ENCODE measurements at regions of chr17 and their contacts with region 1.

Region 1: GRCh38 chr17:48374650-48375230 is 55.3 kb downstream of the SKAP1 start:
- DNase-seq: no peak
- ATAC-seq: peak in 3 of 4 donors; percentile 60 to 67 (median 63)
- H3K4me3 ChIP-seq: no peak overlapping the region
- H3K27ac ChIP-seq: no peak overlapping the region
- H3K4me1 ChIP-seq: no peaks in the 10 kb centered on the region
- H3K27me3 ChIP-seq: peaks cover 4 to 14% (median 9%) of the 10 kb centered on the region in 3 donors
- CTCF ChIP-seq: peak; percentile 74

Region 2: DNA sequence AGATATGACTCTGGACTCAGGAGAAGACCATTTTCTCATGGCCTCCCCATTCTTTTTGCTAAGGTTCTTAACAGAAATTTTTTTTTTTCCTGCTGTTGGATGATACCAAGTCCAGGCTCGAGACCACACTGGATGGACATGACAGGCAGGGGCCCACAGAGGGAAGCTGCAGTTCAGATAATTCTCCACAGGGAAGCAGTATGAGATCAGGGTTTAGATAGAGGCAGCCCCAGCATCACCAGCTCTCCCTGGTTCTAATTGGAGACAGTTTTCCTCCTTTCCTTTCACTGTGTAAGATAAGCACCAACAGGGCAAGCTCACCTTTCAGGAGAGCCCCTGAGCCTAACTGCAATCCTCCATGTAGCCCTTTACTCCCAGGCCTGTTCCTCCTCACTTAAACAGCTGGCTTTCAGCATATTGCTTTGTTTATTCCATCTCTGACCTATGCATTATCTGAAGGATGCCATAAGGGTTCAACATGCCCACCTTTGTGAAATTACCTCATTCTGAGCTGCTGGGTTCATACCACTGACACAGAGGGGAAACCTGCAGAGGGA is 159.1 kb before region 1 on chr17:
- intact Hi-C with region 1: loop called in 1 of 2 experiments (anchors 10 kb)
- DNase-seq: no peak
- ATAC-seq: no peak
- H3K4me3 ChIP-seq: no peak overlapping the region
- H3K27ac ChIP-seq: no peak overlapping the region
- H3K4me1 ChIP-seq: no peaks in the 10 kb centered on the region
- H3K27me3 ChIP-seq: no peaks in the 10 kb centered on the region
- CTCF ChIP-seq: peak; percentile 52

Region 3: DNA sequence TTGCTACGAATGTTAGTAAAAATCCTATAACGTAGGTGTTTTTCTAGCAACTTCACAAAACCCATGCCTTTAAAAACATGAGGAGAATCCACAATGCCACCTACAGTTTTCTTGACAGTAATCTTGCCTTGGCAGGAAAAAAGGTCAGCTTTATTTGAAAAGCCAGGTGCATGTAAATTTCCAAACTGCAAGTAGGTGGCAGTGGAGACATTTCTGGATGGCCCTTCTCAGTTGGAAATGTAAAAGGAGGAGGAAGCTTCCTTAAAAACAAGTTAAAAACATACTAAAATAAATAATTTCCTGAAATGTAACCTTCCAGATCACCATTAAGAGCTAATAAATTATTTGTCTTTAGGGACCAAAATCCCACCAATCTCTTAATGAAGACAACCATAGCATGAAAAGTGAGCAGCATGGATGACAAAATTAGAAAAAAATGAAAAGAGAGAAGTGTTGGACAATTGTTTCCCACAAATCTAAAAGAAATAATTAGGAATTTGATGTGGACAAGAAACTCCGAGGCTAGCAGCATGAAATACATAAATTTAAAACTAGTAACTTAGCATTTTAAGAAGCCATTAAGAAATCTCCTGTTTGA is 114.9 kb before region 1 on chr17:
- intact Hi-C with region 1: loop called in 1 of 2 experiments (anchors 5 kb)
- DNase-seq: no peak
- ATAC-seq: no peak
- H3K4me3 ChIP-seq: no peak overlapping the region
- H3K27ac ChIP-seq: no peak overlapping the region
- H3K4me1 ChIP-seq: no peaks in the 10 kb centered on the region
- H3K27me3 ChIP-seq: no peaks in the 10 kb centered on the region
- CTCF ChIP-seq: peak; percentile 60

Region 4: DNA sequence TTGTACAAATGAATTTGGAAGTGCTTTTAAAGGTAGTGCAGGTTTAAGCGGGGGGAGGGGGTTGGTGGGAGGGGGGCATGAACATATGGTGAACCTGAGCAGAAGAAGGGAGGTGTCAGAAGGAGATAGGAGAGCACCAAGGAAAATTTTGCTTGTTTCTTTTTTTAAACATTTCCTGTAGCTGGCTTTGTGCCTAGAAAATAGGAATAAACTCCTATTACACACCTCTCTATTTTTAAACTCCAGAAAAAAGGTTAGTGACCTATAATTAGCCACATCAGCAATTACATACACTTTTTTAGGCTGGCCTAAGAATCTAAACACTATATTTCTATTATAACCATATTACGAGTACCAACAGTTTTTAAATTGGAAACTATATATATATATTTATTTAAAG is 103.8 kb before region 1 on chr17:
- intact Hi-C with region 1: no loop called
- DNase-seq: no peak
- ATAC-seq: peak in 3 of 4 donors; percentile 84 to 90 (median 85)
- H3K4me3 ChIP-seq: no peak overlapping the region
- H3K27ac ChIP-seq: no peak overlapping the region
- H3K4me1 ChIP-seq: peaks cover 11% of the 10 kb centered on the region
- H3K27me3 ChIP-seq: no peaks in the 10 kb centered on the region
- CTCF ChIP-seq: no peak

Region 5: DNA sequence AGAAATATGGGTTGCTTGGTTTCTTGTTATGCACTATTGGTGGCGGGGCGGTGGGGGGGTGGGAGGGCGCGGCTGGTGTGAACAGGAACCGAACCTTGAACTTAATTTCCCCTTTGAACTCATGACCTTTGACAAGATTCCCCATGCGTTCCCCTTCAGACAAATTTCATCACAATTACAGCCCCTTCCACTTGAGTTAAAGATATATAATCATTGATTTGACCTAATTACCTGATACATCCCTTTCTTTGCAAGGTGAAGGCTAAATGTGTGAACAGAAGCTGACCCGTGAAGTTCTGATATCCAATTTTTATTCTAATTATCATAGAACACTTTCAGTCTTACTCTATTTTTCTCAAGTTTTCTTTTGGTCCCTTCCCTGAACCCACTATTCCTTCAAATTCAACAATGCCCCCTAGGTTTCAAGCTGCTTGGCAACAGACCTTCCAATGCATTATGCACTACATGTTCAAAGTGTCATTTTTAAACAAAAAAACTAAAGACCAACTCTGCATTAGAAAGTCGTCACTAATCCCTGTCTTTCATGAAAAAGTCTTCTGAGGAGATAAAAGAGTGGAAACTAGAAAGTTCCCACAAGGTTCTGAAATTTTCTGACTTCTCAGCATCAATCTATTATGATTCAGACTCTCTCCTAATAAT is 61.5 kb before region 1 on chr17:
- intact Hi-C with region 1: no loop called
- DNase-seq: no peak
- ATAC-seq: no peak
- H3K4me3 ChIP-seq: no peak overlapping the region
- H3K27ac ChIP-seq: no peak overlapping the region
- H3K4me1 ChIP-seq: no peaks in the 10 kb centered on the region
- H3K27me3 ChIP-seq: peaks cover 0 to 33% (median 12%) of the 10 kb centered on the region in 3 donors
- CTCF ChIP-seq: no peak